Gastrocnemius medialis (tissue), 4 donors: ENCODE measurements at regions of chr1 and their contacts with region 1.

Region 1: DNA sequence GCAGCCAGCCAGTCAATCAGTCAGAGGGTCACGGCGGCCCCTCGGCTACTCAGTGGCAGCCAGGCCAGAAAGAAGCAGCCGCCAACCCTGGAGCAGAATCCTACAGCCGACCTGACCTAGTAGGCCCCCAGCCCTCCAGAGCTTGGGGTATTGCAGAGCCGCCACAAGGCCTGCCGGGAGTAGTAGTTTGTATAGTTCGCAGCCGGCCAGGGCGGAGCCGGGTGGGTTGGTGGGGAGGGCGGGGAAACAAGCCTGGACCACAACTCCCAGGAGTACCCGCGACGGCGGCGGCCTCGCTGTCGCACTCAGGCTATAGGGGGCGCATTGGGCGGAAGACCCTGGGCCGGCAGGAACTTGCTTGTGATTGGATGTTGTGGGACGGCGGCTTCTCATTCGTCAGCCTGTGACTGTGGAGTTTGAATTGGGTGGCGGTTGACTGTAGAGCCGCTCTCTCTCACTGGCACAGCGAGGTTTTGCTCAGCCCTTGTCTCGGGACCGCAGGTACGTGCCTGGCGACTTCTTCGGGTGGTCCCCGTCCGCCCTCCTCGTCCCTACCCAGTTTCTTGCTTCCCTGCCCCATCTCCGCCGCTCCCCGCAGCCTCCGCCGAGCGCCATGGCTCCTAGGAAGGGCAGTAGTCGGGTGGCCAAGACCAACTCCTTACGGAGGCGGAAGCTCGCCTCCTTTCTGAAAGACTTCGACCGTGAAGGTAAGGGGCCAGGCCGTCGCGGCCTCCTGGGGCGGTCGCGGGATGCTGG is at the start of gene CDCA8:
- DNase-seq: peak; percentile 97
- ATAC-seq: peak; percentile 80 to 83
- H3K4me3 ChIP-seq: peak within 1 kb of the TSS; percentile 85 to 90 (median 88)
- H3K27ac ChIP-seq: peak within 1 kb of the TSS; percentile 91 to 96 (median 94)
- H3K4me1 ChIP-seq: peaks cover 28% of the 10 kb centered on the region in 2 donors
- H3K27me3 ChIP-seq: no peaks in the 10 kb centered on the region
- CTCF ChIP-seq: peak in 3 of 5 experiments; percentile 49 to 68 (median 51)
- POLR2A ChIP-seq: peak in 1 of 2 donors; percentile 45
- total RNA-seq, gene CDCA8: 0.46 to 1.5 (median 0.60) TPM in 3 of 4 donors, not detected in the other

Region 2: GRCh38 chr1:37514350-37515184 is 177.7 kb before region 1 on chr1 and contains the start of gene MEAF6:
- in situ Hi-C with region 1: no loop called
- intact Hi-C with region 1: loop called (anchors 5 kb)
- DNase-seq: peak; percentile 61 to 73
- ATAC-seq: peak; percentile 96 to 97
- H3K4me3 ChIP-seq: peak within 1 kb of the TSS; percentile 62 to 96 (median 70)
- H3K27ac ChIP-seq: peak within 1 kb of the TSS; percentile 86 to 96 (median 91)
- H3K4me1 ChIP-seq: peaks cover 11 to 14% of the 10 kb centered on the region in 2 donors
- H3K27me3 ChIP-seq: no peaks in the 10 kb centered on the region
- CTCF ChIP-seq: peak; percentile 70 to 94 (median 87)
- POLR2A ChIP-seq: peak; percentile 66 to 74
- total RNA-seq, gene MEAF6: 72.1 to 81.0 (median 74.5) TPM

Region 3: DNA sequence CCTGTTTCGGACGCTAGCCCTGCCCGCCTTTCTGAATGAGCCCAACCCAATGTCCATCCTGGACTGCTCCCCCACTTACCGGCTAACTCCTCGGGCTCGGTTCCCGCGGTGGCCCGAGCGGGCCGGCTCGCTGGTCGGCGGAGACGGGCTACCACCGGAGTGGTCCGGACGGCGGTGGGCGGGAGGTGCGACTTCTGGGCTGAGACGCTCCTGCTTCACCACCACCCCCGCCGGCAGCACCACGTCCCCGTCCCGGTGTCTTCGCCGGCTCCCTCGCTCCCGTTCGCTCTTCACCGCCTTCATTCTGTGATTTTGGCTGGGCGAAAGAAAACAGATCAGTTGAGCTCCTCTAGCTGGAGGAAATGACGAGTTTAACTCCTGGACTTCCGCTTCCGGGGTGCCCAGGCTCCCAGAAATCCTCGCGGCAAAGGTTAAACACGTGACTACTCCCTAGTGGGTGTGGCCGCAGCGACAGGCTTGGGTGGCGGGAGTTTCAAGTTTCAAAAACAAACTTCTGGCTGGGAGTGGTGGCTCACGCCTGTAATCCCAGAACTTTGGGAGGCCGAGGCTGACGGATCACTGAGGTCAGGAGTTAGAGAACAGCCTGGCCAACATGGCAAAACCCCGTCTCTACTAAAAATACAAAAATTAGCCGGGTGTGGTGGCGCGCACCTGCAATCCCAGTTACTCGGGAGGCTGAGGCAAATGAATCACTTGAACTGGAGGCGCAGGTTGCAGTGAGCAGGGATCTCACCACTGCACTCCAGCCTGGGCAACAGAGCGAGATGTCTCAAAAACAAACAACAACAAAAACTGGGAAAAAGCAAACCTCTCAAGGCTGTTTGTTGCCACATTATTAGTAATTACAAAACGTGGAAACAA is 138.1 kb before region 1 on chr1 and contains the start of gene SNIP1:
- in situ Hi-C with region 1: no loop called
- intact Hi-C with region 1: loop called (anchors 2 kb)
- DNase-seq: peak; percentile 91 to 92
- ATAC-seq: peak; percentile 98
- H3K4me3 ChIP-seq: peak within 1 kb of the TSS; percentile 71 to 100 (median 92)
- H3K27ac ChIP-seq: peak within 1 kb of the TSS; percentile 83 to 94 (median 88)
- H3K4me1 ChIP-seq: peaks cover 17 to 21% of the 10 kb centered on the region in 2 donors
- H3K27me3 ChIP-seq: no peaks in the 10 kb centered on the region
- CTCF ChIP-seq: no peak
- POLR2A ChIP-seq: peak; percentile 65 to 81
- total RNA-seq, gene SNIP1: 5.2 to 9.2 (median 6.5) TPM

Region 4: GRCh38 chr1:37606481-37607263 is 85.6 kb before region 1 on chr1:
- in situ Hi-C with region 1: no loop called
- intact Hi-C with region 1: no loop called
- DNase-seq: no peak
- ATAC-seq: no peak
- H3K4me3 ChIP-seq: no peak overlapping the region
- H3K27ac ChIP-seq: no peak overlapping the region
- H3K4me1 ChIP-seq: no peaks in the 10 kb centered on the region
- H3K27me3 ChIP-seq: peaks cover 0 to 11% (median 0%) of the 10 kb centered on the region in 3 donors
- CTCF ChIP-seq: no peak
- POLR2A ChIP-seq: no peak

Region 5: GRCh38 chr1:37714689-37715088 is 22.4 kb after region 1 on chr1:
- in situ Hi-C with region 1: no loop called
- intact Hi-C with region 1: no loop called
- DNase-seq: peak; percentile 55 to 77
- ATAC-seq: peak; percentile 97 to 98
- H3K4me3 ChIP-seq: no peak overlapping the region
- H3K27ac ChIP-seq: peak overlapping the region; percentile 42 to 68 (median 60)
- H3K4me1 ChIP-seq: peaks cover 3% of the 10 kb centered on the region in 2 donors
- H3K27me3 ChIP-seq: no peaks in the 10 kb centered on the region
- CTCF ChIP-seq: no peak
- POLR2A ChIP-seq: no peak

Region 6: DNA sequence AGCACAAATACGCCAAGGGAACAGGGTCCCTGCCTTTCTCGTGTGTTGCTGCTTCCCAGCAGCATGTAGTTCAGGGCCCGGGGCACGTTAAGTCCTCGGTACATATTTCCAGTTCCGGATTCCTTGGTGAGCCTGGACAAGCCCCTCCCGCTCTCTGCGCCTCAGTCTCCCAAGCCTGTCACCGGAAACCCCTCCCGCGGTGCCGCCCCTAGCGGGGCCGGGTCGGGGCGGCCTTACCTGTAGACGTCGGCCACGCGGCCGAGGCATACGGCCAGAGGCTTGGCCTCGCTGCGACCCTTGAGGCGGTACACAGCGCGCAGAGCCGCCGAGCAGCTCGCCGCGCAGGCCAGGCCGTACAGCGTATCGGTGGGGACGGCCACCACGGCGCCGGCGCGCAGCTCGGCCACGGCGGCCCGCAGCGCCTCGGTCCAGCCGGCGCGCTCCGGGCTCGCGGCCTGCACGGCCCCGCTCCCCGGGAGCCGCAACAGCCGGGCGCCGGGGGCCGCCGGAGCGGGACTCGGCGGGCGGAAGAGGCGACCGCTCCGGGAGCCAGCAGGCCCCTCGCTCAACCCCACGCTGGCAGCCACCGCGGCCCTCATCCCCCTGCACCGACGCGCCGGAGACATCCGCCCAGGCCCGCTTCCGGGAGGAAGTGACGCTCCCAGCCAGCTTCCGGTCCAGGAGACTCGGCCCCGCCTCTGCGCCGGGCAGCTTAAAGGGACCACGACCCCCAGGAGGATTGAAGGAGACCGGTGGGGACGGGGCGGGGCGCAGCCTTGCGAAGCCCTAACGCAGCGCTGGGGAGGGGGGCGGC is 115.5 kb after region 1 on chr1 and contains the starts of genes C1orf122 and YRDC:
- in situ Hi-C with region 1: no loop called
- intact Hi-C with region 1: loop called (anchors 2 kb)
- DNase-seq: peak; percentile 90 to 92
- ATAC-seq: peak; percentile 85 to 94
- H3K4me3 ChIP-seq: peak within 1 kb of the TSS; percentile 74 to 93 (median 87)
- H3K27ac ChIP-seq: peak within 1 kb of the TSS; percentile 89 to 98 (median 96)
- H3K4me1 ChIP-seq: peaks cover 29 to 34% of the 10 kb centered on the region in 2 donors
- H3K27me3 ChIP-seq: no peaks in the 10 kb centered on the region
- CTCF ChIP-seq: no peak
- POLR2A ChIP-seq: peak; percentile 89 to 93
- total RNA-seq, gene C1orf122: 41.2 to 96.0 (median 56.8) TPM
- total RNA-seq, gene YRDC: 11.2 to 13.6 (median 11.7) TPM

Region 7: DNA sequence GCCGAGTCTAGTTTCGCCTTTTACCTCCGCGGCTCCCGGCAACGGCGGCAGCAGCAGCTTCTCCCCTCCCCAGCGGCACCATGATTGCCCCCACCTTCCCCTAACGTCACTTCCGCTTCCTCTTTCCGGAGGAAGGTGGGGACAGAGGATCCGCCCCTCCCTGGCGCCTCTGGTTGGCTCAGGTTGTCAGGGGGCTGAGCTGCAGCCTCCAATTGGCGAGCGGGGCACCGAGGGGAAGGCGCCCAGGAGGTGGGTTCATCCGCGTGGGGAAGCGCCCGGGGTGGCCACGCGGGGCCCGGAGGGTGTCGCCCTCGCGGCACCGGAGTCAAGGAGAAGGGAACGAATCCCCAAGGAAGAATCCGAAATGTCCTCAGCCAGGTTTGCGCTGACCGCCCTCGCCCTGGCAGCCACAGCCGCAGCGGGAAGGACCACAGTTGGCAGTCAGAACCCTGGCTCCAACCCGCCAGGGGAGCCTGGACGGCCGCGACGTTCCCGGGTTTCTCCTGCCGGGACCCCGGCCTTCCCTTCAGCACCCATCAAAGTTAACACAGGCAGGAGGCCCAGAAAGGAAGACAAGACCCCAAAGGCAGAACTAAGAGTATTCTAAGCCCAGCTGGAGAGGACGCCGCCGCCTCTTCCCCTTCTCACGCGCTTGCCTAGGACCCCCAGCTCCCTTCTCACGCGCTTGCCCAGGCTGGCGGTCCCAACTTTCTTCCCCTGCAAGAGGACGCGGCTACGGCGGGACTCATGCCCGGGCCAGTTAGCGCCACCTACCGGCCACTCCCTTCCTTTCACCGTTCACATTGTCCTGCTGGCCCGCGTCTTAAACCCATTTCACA is 167.5 kb after region 1 on chr1 and contains the start of gene MTF1:
- in situ Hi-C with region 1: loop called in 1 of 4 experiments (anchors 10 kb)
- intact Hi-C with region 1: loop called (anchors 1 kb)
- DNase-seq: peak; percentile 98
- ATAC-seq: peak; percentile 94 to 96
- H3K4me3 ChIP-seq: peak within 1 kb of the TSS; percentile 80 to 96 (median 90)
- H3K27ac ChIP-seq: peak within 1 kb of the TSS; percentile 92 to 99 (median 96)
- H3K4me1 ChIP-seq: peaks cover 30 to 34% of the 10 kb centered on the region in 2 donors
- H3K27me3 ChIP-seq: no peaks in the 10 kb centered on the region
- CTCF ChIP-seq: peak; percentile 88 to 95 (median 92)
- POLR2A ChIP-seq: peak; percentile 85 to 94
- total RNA-seq, gene MTF1: 4.0 to 9.4 (median 6.4) TPM

Region 8: GRCh38 chr1:38026592-38027200 is 334.4 kb after region 1 on chr1:
- in situ Hi-C with region 1: no loop called
- intact Hi-C with region 1: loop called (anchors 10 kb)
- DNase-seq: peak in 1 of 2 donors; percentile 69
- ATAC-seq: no peak
- H3K4me3 ChIP-seq: no peak overlapping the region
- H3K27ac ChIP-seq: peak overlapping the region; percentile 76 to 100 (median 84)
- H3K4me1 ChIP-seq: peaks cover 76 to 86% of the 10 kb centered on the region in 2 donors
- H3K27me3 ChIP-seq: no peaks in the 10 kb centered on the region
- CTCF ChIP-seq: peak; percentile 31 to 67 (median 49)
- POLR2A ChIP-seq: no peak